ENCODE measurements at regions of chr12 and their contacts with region 1.

Region 1: GRCh38 chr12:130013771-130014484 is 110.1 kb upstream of the TMEM132D start:
- DNase-seq: peak; percentile 64
- H3K4me3 Mint-ChIP-seq: no peak overlapping the region
- H3K27ac Mint-ChIP-seq: no peak overlapping the region
- H3K4me1 Mint-ChIP-seq: no peaks in the 10 kb centered on the region
- H3K27me3 Mint-ChIP-seq: peaks cover 7% of the 10 kb centered on the region

Region 2: GRCh38 chr12:128644664-128645296 is 1369.1 kb before region 1 on chr12:
- CTCF ChIA-PET with region 1: no interaction called
- intact Hi-C with region 1: loop called (anchors 5 kb)
- DNase-seq: peak; percentile 44
- H3K4me3 Mint-ChIP-seq: no peak overlapping the region
- H3K27ac Mint-ChIP-seq: no peak overlapping the region
- H3K4me1 Mint-ChIP-seq: no peaks in the 10 kb centered on the region
- H3K27me3 Mint-ChIP-seq: peaks cover 4% of the 10 kb centered on the region

Region 3: DNA sequence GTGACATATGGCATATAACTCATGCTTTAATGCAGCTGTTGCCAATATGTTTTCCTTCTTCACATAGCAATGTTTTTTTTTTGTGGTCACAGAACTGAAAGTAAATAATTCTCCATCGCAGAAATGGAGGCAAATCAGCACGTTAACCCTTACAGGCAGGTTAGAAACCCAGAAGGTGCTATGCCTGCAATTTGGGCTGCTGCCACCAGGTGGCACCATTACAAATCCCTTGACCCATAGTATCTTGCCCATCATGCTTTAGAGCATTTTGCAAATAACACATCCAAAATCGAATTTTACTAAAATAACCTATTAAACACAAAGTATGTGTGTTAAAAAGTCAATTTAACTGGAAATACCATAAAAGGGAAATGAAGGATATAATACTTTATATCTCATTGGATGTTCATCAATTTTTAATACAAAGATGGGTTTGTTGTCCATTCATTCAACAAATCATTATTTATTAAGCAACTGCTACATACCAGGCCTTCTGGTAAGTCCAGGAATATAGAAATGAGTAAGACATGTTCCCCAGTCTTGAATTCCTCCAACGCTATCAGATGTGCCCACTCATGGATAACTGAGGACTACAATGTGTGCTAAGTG is 820.6 kb before region 1 on chr12:
- CTCF ChIA-PET with region 1: interaction called, 4 read pairs
- intact Hi-C with region 1: loop called (anchors 2 kb)
- DNase-seq: peak; percentile 29
- H3K4me3 Mint-ChIP-seq: no peak overlapping the region
- H3K27ac Mint-ChIP-seq: no peak overlapping the region
- H3K4me1 Mint-ChIP-seq: no peaks in the 10 kb centered on the region
- H3K27me3 Mint-ChIP-seq: peaks cover 8% of the 10 kb centered on the region

Region 4: DNA sequence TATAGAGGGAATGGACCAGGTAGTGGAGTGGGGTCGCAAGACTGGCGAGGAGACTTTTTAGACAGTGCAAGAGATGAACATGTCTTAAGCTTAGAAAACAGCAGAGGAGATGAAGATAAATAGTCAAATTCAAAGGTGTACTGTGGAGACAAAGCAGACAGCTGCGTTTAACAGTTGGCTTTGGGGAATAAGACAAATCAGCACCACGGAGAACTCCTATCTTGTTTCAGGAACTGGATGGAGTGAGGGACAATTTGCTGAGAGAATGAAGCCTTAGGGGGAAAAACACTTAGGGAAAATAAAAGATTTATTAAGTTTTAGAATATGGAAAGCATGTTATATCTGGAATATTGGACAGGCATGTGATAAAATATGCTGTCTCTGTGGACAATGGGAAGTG is 701.9 kb before region 1 on chr12:
- CTCF ChIA-PET with region 1: no interaction called
- intact Hi-C with region 1: no loop called
- DNase-seq: no peak
- H3K4me3 Mint-ChIP-seq: no peak overlapping the region
- H3K27ac Mint-ChIP-seq: no peak overlapping the region
- H3K4me1 Mint-ChIP-seq: no peaks in the 10 kb centered on the region
- H3K27me3 Mint-ChIP-seq: no peaks in the 10 kb centered on the region

Region 5: GRCh38 chr12:130026608-130027176 is 12.8 kb after region 1 on chr12:
- CTCF ChIA-PET with region 1: interaction called, 18 read pairs
- intact Hi-C with region 1: no loop called
- DNase-seq: peak; percentile 71
- H3K4me3 Mint-ChIP-seq: no peak overlapping the region
- H3K27ac Mint-ChIP-seq: no peak overlapping the region
- H3K4me1 Mint-ChIP-seq: no peaks in the 10 kb centered on the region
- H3K27me3 Mint-ChIP-seq: peaks cover 29% of the 10 kb centered on the region